Activated B cell treated with CpG ODN at 0.5 μM for 24 hours (primary cell): ENCODE measurements at regions of chr16 and their contacts with region 1.

Region 1: GRCh38 chr16:88437373-88437964 is 15.6 kb upstream of the ZFPM1 start:
- DNase-seq: peak; percentile 71
- ATAC-seq: peak; percentile 80
- H3K4me3 Mint-ChIP-seq: no peak overlapping the region
- H3K27ac Mint-ChIP-seq: no peak overlapping the region
- H3K4me1 Mint-ChIP-seq: no peaks in the 10 kb centered on the region
- H3K27me3 Mint-ChIP-seq: no peaks in the 10 kb centered on the region
- CTCF ChIP-seq: no peak

Region 2: DNA sequence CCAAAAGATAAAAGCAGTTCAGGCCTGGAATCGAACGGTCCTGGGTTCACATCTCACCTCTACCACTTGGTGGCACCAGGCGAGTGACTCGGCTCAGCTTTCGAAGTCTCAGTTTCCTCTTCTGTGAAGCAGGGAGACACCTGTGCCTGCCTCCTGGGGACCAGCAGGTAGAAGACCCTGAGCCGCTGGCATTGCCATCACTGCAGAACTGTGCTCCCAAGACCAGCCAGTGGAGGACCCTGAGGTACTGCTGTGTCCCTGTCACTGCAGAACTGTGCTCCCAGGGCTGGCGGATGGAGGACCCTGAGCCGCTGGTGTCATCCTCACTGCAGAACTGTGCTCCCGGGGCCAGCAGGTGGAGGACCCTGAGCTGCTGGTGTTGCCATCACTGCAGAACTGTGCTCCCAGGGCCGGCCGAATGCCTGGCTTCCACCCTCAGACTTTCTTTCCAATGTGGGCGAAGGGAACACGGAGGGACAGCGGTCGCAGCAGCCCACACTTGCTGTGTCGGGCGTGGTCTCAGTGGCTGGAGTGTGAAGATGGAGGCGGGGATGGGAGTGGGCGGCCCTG is 559.4 kb before region 1 on chr16:
- CTCF ChIA-PET with region 1: no interaction called
- POLR2A ChIA-PET with region 1: no interaction called
- intact Hi-C with region 1: loop called (anchors 5 kb)
- DNase-seq: no peak
- ATAC-seq: peak; percentile 32
- H3K4me3 Mint-ChIP-seq: no peak overlapping the region
- H3K27ac Mint-ChIP-seq: no peak overlapping the region
- H3K4me1 Mint-ChIP-seq: peaks cover 10% of the 10 kb centered on the region
- H3K27me3 Mint-ChIP-seq: peaks cover 8% of the 10 kb centered on the region
- CTCF ChIP-seq: no peak

Region 3: DNA sequence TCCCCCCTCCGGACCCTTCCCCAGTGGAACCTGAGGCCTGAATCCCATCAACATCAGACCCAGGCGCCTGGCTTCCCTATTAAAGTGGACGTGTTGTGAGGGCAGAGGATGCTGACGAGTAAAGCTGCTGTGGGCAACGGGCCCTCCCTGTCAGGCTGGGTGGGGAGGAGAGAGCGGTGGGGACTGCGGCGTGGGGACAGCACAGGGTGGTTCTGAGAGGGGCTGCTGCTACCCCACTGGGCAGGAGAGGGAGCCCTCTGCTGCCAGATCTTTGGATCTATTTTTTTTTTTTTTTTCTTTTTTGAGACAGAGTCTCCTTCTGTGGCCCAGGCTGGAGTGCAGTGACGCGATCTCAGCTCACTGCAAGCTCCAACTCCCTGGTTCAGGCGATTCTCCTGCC is 507.0 kb before region 1 on chr16:
- CTCF ChIA-PET with region 1: interaction called, 4 read pairs
- POLR2A ChIA-PET with region 1: no interaction called
- intact Hi-C with region 1: loop called (anchors 1 kb)
- DNase-seq: no peak
- ATAC-seq: peak; percentile 22
- H3K4me3 Mint-ChIP-seq: no peak overlapping the region
- H3K27ac Mint-ChIP-seq: no peak overlapping the region
- H3K4me1 Mint-ChIP-seq: peaks cover 23% of the 10 kb centered on the region
- H3K27me3 Mint-ChIP-seq: peaks cover 3% of the 10 kb centered on the region
- CTCF ChIP-seq: no peak

Region 4: DNA sequence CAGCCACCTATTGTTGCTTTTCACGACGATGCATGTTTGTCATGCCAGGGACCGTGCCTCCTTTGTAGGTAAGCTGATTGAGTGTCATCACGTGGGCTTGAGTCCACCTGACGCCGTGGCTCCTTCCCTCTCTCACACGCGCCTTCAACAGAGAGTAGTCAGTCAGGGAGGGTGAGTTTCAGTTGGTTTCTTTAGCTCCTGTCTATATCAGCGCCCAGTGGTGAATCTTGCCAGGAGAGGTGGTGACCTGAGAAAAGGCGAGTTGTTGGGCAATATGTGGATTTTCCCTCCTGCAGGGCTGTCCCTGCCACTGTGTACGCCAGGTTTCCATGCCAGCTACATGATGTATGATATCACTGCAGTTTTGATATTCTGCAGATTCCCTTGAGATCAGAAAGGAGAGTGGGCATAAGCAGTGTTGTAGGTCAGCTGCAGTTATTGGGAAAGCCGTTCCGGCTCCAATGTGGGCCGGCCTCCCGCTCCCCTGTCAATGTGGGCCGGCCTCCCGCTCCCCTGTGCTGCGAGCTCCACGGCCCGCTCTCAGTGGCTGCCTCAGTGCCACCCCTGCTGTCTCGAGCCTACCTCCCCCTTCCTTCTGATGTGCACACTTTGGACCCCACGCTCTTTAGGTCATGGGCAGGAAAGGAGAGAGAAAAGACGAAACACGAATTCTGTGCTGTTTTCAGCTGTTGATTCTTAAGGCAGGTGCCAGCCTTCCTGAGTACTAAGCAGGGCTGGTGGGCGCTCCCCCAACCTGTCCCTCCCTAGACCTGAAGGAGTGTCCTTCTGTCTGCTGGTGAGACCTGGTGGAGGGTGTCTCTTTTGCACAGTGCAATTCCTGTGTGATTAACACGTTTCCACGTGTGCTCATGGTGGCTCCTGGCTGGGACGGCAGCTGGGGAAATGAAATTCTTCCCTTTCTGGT is 454.7 kb before region 1 on chr16:
- CTCF ChIA-PET with region 1: interaction called, 5 read pairs
- POLR2A ChIA-PET with region 1: no interaction called
- intact Hi-C with region 1: loop called (anchors 5 kb)
- DNase-seq: no peak
- ATAC-seq: no peak
- H3K4me3 Mint-ChIP-seq: peak overlapping the region; percentile 41
- H3K27ac Mint-ChIP-seq: peak overlapping the region; percentile 89
- H3K4me1 Mint-ChIP-seq: peaks cover 44% of the 10 kb centered on the region
- H3K27me3 Mint-ChIP-seq: no peaks in the 10 kb centered on the region
- CTCF ChIP-seq: no peak

Region 5: GRCh38 chr16:88194397-88195268 is 242.8 kb before region 1 on chr16:
- CTCF ChIA-PET with region 1: interaction called, 3 read pairs
- POLR2A ChIA-PET with region 1: no interaction called
- intact Hi-C with region 1: loop called (anchors 10 kb)
- DNase-seq: no peak
- ATAC-seq: no peak
- H3K4me3 Mint-ChIP-seq: no peak overlapping the region
- H3K27ac Mint-ChIP-seq: no peak overlapping the region
- H3K4me1 Mint-ChIP-seq: no peaks in the 10 kb centered on the region
- H3K27me3 Mint-ChIP-seq: no peaks in the 10 kb centered on the region
- CTCF ChIP-seq: no peak

Region 6: GRCh38 chr16:88368036-88368435 is 69.4 kb before region 1 on chr16:
- CTCF ChIA-PET with region 1: no interaction called
- POLR2A ChIA-PET with region 1: no interaction called
- intact Hi-C with region 1: no loop called
- DNase-seq: no peak
- ATAC-seq: no peak
- H3K4me3 Mint-ChIP-seq: no peak overlapping the region
- H3K27ac Mint-ChIP-seq: no peak overlapping the region
- H3K4me1 Mint-ChIP-seq: peaks cover 9% of the 10 kb centered on the region
- H3K27me3 Mint-ChIP-seq: peaks cover 3% of the 10 kb centered on the region
- CTCF ChIP-seq: no peak

Region 7: GRCh38 chr16:88473666-88474534 is 36.4 kb after region 1 on chr16:
- CTCF ChIA-PET with region 1: no interaction called
- POLR2A ChIA-PET with region 1: no interaction called
- intact Hi-C with region 1: no loop called
- DNase-seq: no peak
- ATAC-seq: no peak
- H3K4me3 Mint-ChIP-seq: no peak overlapping the region
- H3K27ac Mint-ChIP-seq: no peak overlapping the region
- H3K4me1 Mint-ChIP-seq: peaks cover 39% of the 10 kb centered on the region
- H3K27me3 Mint-ChIP-seq: no peaks in the 10 kb centered on the region
- CTCF ChIP-seq: no peak

Region 8: DNA sequence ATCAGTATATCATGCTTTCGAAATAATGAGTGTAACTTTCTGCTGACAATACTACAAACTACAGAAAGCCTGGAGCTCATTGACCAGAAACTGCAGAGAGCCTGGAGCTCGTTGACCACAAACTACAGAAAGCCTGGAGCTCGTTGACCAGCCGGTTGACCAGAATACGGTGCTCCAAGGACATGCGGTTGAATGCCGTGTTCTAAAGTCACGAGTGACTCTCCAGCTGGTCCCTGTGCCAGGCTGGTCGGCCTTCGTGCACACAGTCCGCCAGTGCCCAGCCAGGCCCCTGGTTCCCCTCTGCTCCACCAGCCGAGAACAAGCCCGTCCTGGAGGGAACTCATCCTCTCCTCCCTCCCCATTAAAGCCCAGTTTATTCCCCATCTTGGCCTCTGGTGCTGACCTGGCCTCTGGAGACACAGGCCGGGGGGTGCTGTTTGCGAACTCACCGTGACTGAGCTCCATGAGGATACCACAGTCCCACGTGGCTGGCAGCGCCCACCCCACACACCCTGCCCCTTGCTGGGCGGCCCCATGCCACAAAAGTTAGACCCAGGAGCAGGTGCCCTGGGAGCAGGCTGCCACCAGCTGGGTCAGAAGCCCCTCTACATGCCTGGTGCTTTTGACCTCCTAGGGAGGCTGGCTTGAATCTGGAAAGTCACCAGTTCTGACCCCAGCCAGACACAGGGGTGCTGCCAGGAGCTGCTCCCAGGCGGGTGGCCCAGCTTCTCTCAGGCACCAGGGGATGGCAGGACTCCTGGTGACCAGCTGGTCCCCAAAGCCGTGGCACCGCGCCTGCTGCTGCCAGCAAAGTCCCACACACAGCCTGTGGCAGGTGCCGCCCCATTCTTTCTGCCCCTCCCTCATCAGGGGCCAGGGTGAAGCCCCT is 718.6 kb after region 1 on chr16:
- CTCF ChIA-PET with region 1: no interaction called
- POLR2A ChIA-PET with region 1: no interaction called
- intact Hi-C with region 1: no loop called
- DNase-seq: no peak
- ATAC-seq: no peak
- H3K4me3 Mint-ChIP-seq: no peak overlapping the region
- H3K27ac Mint-ChIP-seq: no peak overlapping the region
- H3K4me1 Mint-ChIP-seq: peaks cover 19% of the 10 kb centered on the region
- H3K27me3 Mint-ChIP-seq: no peaks in the 10 kb centered on the region
- CTCF ChIP-seq: no peak